Left cardiac atrium (tissue), 4 donors: ENCODE measurements at regions of chr14 and their contacts with region 1.

Region 1: DNA sequence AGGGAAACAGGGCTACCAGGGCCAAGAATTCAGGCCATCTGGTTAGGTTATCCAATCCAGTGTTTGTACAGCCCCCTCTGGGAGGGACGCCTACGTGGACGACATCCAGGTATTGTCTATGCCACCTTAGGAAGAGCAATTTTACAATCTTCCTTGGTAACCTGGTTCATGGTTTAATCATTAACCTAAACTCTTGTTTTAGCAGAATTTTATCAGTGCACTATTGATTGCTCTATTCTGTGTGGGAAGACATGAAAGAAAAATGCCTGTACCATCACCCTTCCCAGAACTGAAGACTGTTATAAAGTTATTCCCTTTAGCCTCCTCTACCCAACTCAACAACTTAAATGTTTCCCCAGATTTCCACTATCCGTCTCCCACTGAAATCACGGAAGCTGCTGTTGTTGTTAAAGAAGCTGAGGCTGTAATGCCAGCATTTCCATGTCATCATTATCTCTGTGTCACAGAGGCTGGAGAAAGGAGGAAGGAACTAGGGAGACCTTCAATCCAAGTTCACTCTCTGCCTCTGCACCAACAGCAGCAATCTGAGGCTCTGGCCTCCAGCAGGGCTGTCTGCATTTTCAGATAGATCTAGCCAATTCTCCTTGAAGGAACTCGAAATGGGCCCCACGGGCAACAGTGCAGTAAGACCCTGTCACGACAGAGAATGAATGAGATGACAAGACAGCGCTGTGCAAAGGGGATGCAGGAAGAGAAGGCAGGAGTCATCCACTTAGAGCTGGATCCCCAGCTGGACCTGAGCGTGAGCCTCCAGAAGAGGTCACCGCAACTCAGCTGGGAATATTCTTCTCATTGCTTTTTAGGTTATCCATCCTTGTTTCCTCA is 183.4 kb upstream of the GZMB start:
- DNase-seq: no peak
- ATAC-seq: peak; percentile 38 to 46

Region 2: DNA sequence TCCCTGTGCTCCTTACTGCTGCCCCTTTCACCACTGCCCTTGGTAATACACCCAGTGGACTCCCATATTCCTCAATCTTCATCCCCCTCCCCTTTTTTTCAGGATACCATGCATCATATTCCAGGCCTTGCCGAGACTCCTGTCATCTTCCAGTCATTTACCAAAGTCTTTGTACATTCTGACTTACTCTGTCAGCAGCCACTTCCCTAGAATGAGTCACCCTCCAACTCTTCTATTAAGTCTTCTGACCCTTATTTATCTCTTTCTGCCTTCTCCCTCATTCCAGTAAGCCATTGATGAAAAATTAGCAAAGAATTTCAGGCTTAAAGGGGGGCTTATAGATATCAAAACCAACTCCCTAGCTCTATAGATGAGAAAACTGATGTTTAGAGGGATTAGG is 104.5 kb after region 1 on chr14:
- intact Hi-C with region 1: no loop called
- DNase-seq: no peak
- ATAC-seq: peak in 1 of 2 donors; percentile 79

Region 3: DNA sequence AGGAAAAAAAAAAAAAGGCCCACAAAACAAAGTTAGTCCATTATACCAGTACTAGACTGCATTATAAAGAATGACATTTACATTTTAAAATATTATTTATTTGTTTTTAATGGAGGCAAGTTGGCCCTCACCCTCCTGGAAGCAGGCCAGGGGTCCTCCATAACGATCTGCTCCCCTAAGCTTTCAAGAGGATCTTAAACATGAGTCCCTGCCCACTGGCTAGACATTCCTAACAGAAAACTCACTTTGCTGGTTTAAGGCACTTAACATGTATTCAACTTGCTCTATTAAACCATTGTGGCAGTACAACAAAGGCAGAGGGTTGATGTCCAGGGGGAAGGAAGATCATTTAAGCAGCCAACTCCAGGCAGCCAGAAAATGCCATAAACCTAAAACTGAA is 121.2 kb after region 1 on chr14:
- intact Hi-C with region 1: loop called in 1 of 2 experiments (anchors 10 kb)
- DNase-seq: no peak
- ATAC-seq: no peak

Region 4: GRCh38 chr14:25042362-25043299 is 225.2 kb after region 1 on chr14:
- intact Hi-C with region 1: loop called in 1 of 2 experiments (anchors 5 kb)
- DNase-seq: peak; percentile 31
- ATAC-seq: peak; percentile 56 to 80

Region 5: GRCh38 chr14:25111061-25111601 is 293.7 kb after region 1 on chr14:
- intact Hi-C with region 1: loop called in 1 of 2 experiments (anchors 10 kb)
- DNase-seq: peak; percentile 25
- ATAC-seq: peak; percentile 95 to 100